ENCODE measurements at regions of chr10 and their contacts with region 1.

Region 1: GRCh38 chr10:48656241-48656913 is 28.3 kb upstream of the WDFY4 start:
- DNase-seq: peak; percentile 92
- ATAC-seq: peak; percentile 98
- H3K4me3 Mint-ChIP-seq: peak overlapping the region; percentile 68
- H3K27ac Mint-ChIP-seq: no peak overlapping the region
- H3K4me1 Mint-ChIP-seq: peaks cover 12% of the 10 kb centered on the region
- H3K27me3 Mint-ChIP-seq: peaks cover 35% of the 10 kb centered on the region

Region 2: GRCh38 chr10:48363617-48364355 is 292.6 kb before region 1 on chr10:
- CTCF ChIA-PET with region 1: interaction called, 62 read pairs
- DNase-seq: peak; percentile 53
- ATAC-seq: peak; percentile 60
- H3K4me3 Mint-ChIP-seq: no peak overlapping the region
- H3K27ac Mint-ChIP-seq: no peak overlapping the region
- H3K4me1 Mint-ChIP-seq: peaks cover 9% of the 10 kb centered on the region
- H3K27me3 Mint-ChIP-seq: no peaks in the 10 kb centered on the region

Region 3: DNA sequence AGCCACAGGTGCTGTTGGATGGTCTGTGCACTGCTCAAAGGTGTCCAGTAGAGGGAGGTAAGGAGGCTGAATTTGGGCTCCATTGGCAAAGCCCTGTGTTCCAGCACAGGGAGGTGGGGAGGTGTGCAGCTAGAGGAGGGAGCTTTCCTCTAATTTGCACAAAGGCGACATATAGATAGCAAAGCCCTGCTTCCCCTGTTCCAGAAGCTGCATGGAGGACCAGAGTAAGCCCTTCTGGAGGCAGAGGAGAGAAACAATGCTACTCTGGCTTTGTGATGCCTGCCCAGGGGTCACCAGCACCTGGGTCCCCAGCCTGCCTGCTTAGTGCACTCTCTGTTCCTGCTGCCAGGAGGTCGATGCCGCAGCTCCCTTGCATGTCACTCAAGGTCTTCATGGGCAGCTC is 48.1 kb before region 1 on chr10:
- CTCF ChIA-PET with region 1: interaction called, 43 read pairs
- DNase-seq: peak; percentile 55
- ATAC-seq: peak; percentile 77
- H3K4me3 Mint-ChIP-seq: no peak overlapping the region
- H3K27ac Mint-ChIP-seq: no peak overlapping the region
- H3K4me1 Mint-ChIP-seq: peaks cover 2% of the 10 kb centered on the region
- H3K27me3 Mint-ChIP-seq: peaks cover 35% of the 10 kb centered on the region

Region 4: GRCh38 chr10:48620719-48621118 is 35.7 kb before region 1 on chr10:
- CTCF ChIA-PET with region 1: interaction called, 15 read pairs
- DNase-seq: no peak
- ATAC-seq: no peak
- H3K4me3 Mint-ChIP-seq: no peak overlapping the region
- H3K27ac Mint-ChIP-seq: no peak overlapping the region
- H3K4me1 Mint-ChIP-seq: no peaks in the 10 kb centered on the region
- H3K27me3 Mint-ChIP-seq: peaks cover 52% of the 10 kb centered on the region

Region 5: DNA sequence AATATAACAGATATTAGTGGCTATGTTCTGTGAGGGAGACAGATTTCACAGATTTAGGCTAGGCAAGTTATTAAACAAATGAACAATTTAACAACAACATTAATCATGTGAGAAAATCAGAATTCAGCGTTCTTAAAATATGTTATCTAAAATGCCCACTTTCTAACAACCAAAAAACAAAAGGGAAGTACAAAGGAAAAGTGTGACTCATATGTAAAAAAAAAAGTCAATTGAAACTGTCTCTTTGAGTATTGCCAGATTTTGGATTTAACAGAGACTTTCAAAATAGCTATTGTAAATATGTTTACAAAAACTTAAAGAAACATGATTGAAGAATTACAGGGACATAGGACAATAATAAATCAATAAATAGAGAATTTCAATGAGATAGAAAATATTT is 16.7 kb before region 1 on chr10:
- CTCF ChIA-PET with region 1: interaction called, 18 read pairs
- DNase-seq: no peak
- ATAC-seq: no peak
- H3K4me3 Mint-ChIP-seq: no peak overlapping the region
- H3K27ac Mint-ChIP-seq: no peak overlapping the region
- H3K4me1 Mint-ChIP-seq: peaks cover 1% of the 10 kb centered on the region
- H3K27me3 Mint-ChIP-seq: peaks cover 35% of the 10 kb centered on the region

Region 6: GRCh38 chr10:49512121-49512809 is 855.9 kb after region 1 on chr10:
- CTCF ChIA-PET with region 1: interaction called, 10 read pairs
- DNase-seq: peak; percentile 46
- ATAC-seq: peak; percentile 68
- H3K4me3 Mint-ChIP-seq: no peak overlapping the region
- H3K27ac Mint-ChIP-seq: no peak overlapping the region
- H3K4me1 Mint-ChIP-seq: peaks cover 21% of the 10 kb centered on the region
- H3K27me3 Mint-ChIP-seq: no peaks in the 10 kb centered on the region